PC-3 (cell line): ENCODE measurements at regions of chr17 and their contacts with region 1.

Region 1: GRCh38 chr17:66317629-66318028 is 15.2 kb downstream of the PRKCA start:
- DNase-seq: peak; percentile 39
- ATAC-seq: peak; percentile 57
- H3K4me3 ChIP-seq: no peak overlapping the region
- H3K27ac ChIP-seq: peak overlapping the region; percentile 8
- H3K4me1 ChIP-seq: peaks cover 22% of the 10 kb centered on the region
- H3K27me3 ChIP-seq: no peaks in the 10 kb centered on the region
- CTCF ChIP-seq: no peak

Region 2: DNA sequence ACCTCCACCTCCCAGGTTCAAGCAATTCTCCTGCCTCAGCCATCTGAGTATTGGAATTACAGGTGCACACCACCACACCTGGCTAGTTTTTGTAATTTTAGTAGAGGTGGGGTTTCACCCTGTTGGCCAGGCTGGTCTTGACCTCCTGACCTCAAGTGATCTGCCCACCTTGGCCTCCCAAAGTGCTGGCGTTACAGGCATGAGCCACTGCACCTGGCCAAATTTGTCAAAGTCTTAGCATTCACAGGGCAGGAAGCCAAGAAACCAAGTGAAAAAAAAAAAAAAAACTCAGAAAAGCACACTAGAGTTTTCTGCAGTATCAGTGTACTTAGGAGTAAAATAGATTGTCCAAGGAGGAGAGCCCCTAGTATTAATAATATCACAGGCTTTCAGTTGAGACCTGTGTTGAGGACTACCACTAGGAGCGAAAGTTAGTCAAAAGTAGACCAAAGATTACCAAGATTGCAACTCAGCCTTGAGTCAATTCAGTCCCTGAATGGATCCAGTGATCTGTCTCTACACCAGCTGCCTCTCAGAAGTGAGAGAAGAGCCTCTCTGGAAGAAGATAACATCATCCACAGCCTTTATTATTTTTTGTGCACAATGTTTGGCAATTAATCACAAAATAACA is 285.4 kb before region 1 on chr17:
- CTCF ChIA-PET with region 1: no interaction called
- POLR2A ChIA-PET with region 1: no interaction called
- intact Hi-C with region 1: no loop called
- DNase-seq: no peak
- ATAC-seq: no peak
- H3K4me3 ChIP-seq: no peak overlapping the region
- H3K27ac ChIP-seq: no peak overlapping the region
- H3K4me1 ChIP-seq: no peaks in the 10 kb centered on the region
- H3K27me3 ChIP-seq: no peaks in the 10 kb centered on the region
- CTCF ChIP-seq: no peak

Region 3: DNA sequence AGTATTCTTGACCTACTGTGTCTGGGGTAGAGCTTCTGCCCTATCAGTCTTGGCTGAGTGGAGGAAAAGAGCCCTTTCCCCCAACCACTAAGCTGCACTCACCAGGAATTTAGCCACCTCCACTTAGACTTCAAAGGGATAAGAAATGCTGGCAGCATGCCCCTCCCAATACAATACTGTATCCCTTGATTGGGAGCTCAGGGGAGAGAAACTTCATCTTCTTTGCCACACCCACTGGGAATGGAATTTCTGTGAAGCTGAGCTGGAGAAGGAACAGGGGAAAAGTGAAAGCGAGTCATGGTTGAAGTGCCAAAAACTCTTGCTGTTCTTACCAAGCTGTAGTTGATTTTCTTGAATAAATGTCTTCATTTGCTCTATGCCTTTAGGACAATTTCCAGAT is 194.5 kb before region 1 on chr17:
- CTCF ChIA-PET with region 1: no interaction called
- POLR2A ChIA-PET with region 1: no interaction called
- intact Hi-C with region 1: no loop called
- DNase-seq: peak; percentile 52
- ATAC-seq: no peak
- H3K4me3 ChIP-seq: no peak overlapping the region
- H3K27ac ChIP-seq: no peak overlapping the region
- H3K4me1 ChIP-seq: no peaks in the 10 kb centered on the region
- H3K27me3 ChIP-seq: no peaks in the 10 kb centered on the region
- CTCF ChIP-seq: no peak

Region 4: DNA sequence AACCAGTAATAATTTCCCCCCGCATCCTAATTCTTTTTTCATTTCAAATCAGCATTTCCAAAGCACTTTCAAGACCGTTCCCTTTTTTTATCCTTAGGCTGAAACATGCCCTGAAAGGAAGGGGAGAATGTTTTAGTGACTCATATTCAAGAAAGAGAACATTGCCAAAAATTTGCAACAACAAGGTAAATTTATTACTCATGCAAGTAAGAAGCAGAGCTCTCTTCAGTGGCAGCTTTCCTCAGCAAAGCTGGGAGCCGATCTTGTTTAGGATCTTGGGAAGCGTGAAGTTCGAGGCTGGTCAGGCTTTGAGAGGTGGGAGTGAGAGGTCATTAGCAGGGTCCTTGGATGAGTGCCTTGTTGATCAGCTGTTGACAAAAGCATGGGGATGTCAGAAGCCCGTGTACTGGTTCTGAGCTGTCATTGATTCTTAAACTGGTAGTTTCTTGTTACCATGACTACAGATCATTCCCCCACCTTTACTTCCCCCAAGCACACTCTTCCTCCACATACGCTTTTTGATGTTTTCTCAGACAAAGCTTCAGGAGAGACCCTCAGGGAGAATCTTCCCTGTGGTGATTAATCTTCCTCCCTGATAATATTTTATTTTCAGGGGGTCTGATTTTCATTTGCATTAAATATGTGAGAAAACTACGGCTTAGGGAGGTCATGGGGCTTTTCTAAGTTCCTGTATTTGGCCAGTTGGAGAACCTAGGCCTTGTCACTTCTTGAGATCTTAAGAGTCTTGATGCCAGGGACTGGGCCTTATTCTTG is 114.5 kb after region 1 on chr17:
- CTCF ChIA-PET with region 1: interaction called, 10 read pairs
- POLR2A ChIA-PET with region 1: no interaction called
- intact Hi-C with region 1: no loop called
- DNase-seq: peak; percentile 93
- ATAC-seq: peak; percentile 94
- H3K4me3 ChIP-seq: peak overlapping the region; percentile 20; the same call in 1 of the 2 replicates
- H3K27ac ChIP-seq: peak overlapping the region; percentile 31
- H3K4me1 ChIP-seq: peaks cover 27% of the 10 kb centered on the region
- H3K27me3 ChIP-seq: no peaks in the 10 kb centered on the region
- CTCF ChIP-seq: no peak